AG04450 (cell line): ENCODE measurements at regions of chr12 and their contacts with region 1.

Region 1: GRCh38 chr12:50986966-50987737 is 34.8 kb downstream of the HIGD1C start:
- DNase-seq: peak; percentile 32
- H3K4me3 ChIP-seq: no peak overlapping the region
- H3K27ac ChIP-seq: no peak overlapping the region
- H3K27me3 ChIP-seq: no peaks in the 10 kb centered on the region
- CTCF ChIP-seq: peak; percentile 75

Region 2: DNA sequence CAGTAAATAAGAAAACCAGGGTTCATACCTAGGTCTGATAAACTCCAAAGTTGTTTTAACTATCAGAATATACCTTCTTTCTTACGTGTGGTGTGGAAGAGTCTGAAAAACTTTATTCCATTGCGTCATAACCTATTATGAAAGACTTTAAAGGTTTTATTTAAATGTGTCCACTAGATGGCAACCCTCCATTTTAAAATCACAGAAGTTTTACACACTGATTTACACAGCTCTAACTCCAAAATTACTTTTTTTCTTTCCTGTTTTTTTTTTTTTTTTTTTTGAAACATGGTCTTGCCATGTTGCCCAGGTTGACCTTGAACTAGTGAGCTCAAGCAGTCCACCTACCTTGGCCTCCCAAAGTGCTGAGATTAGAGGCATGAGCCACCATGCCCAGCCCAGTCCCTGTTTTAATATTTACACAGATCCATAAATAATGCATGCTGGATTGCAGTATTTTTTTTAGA is 161.7 kb before region 1 on chr12:
- CTCF ChIA-PET with region 1: interaction called, 160 read pairs
- POLR2A ChIA-PET with region 1: interaction called, 12 read pairs
- DNase-seq: peak; percentile 50
- H3K4me3 ChIP-seq: no peak overlapping the region
- H3K27ac ChIP-seq: no peak overlapping the region
- H3K27me3 ChIP-seq: no peaks in the 10 kb centered on the region
- CTCF ChIP-seq: peak; percentile 37

Region 3: GRCh38 chr12:50924439-50925341 is 62.5 kb before region 1 on chr12:
- CTCF ChIA-PET with region 1: interaction called, 17 read pairs
- POLR2A ChIA-PET with region 1: interaction called, 4 read pairs
- DNase-seq: peak; percentile 71
- H3K4me3 ChIP-seq: peak overlapping the region; percentile 67
- H3K27ac ChIP-seq: peak overlapping the region; percentile 71
- H3K27me3 ChIP-seq: no peaks in the 10 kb centered on the region
- CTCF ChIP-seq: no peak